Activated naive CD4-positive, alpha-beta T cell treated with anti-CD3 and anti-CD28 coated beads for 36 hours (primary cell): ENCODE measurements at regions of chr1 and their contacts with region 1.

Region 1: DNA sequence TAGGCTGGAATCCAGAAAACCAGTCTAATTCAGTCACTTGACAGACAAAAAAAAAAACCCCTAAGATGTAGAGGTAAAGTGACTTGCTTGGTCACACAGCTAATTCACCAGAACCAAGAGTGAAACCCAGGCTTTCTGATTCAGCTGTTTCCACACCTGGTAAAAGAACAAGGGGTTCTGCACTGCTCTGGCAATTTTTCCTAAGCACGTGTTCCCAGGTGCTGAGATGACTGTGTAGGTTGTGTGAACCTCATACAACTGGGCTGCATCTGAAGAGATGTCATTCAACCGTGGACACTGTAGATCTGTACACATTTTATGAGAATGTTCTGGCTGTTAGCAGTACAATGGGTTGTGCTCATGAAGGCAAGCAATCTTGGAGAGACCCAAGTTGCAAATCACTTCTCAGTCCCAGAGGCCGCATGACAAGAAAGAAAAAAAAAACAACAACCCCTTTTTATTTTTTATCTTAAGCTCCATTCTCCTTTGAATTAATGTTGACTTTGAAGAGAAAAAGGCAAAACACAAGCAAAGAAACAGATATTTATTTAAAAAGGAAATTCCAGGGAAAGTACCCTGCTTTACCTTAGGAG is 95.4 kb downstream of the INTS7 start:
- DNase-seq: peak; percentile 86
- H3K4me3 Mint-ChIP-seq: no peak overlapping the region
- H3K27ac Mint-ChIP-seq: no peak overlapping the region
- H3K4me1 Mint-ChIP-seq: peaks cover 44% of the 10 kb centered on the region
- H3K27me3 Mint-ChIP-seq: no peaks in the 10 kb centered on the region

Region 2: DNA sequence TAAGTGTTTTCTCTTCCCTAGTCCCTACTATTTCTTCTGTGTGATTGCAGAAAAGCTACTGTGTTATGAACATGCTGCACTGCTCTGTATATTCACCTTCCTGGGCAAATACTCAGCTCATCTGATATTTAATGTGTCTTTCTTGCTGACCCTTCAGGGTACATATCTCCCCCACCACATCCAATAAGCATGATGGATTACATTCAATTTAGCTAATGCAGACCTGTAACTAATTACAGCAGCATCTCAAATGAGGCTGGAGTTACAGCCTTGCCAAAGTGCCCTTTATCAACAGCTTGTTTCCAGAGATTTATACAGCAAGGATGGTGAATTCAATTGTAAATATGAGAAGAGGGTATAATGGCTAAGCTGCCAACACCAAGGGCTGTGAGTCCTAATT is 950.1 kb before region 1 on chr1:
- CTCF ChIA-PET with region 1: no interaction called
- intact Hi-C with region 1: no loop called
- DNase-seq: no peak
- H3K4me3 Mint-ChIP-seq: no peak overlapping the region
- H3K27ac Mint-ChIP-seq: no peak overlapping the region
- H3K4me1 Mint-ChIP-seq: no peaks in the 10 kb centered on the region
- H3K27me3 Mint-ChIP-seq: peaks cover 28% of the 10 kb centered on the region

Region 3: GRCh38 chr1:211680752-211681327 is 259.1 kb before region 1 on chr1:
- CTCF ChIA-PET with region 1: no interaction called
- intact Hi-C with region 1: loop called (anchors 2 kb)
- DNase-seq: peak; percentile 80
- H3K4me3 Mint-ChIP-seq: no peak overlapping the region
- H3K27ac Mint-ChIP-seq: peak overlapping the region; percentile 24
- H3K4me1 Mint-ChIP-seq: peaks cover 7% of the 10 kb centered on the region
- H3K27me3 Mint-ChIP-seq: no peaks in the 10 kb centered on the region

Region 4: GRCh38 chr1:211830330-211831142 is 109.4 kb before region 1 on chr1 and contains the start of gene LPGAT1:
- CTCF ChIA-PET with region 1: no interaction called
- intact Hi-C with region 1: loop called (anchors 1 kb)
- DNase-seq: peak; percentile 75
- H3K4me3 Mint-ChIP-seq: peak within 1 kb of the TSS; percentile 82
- H3K27ac Mint-ChIP-seq: peak within 1 kb of the TSS; percentile 75
- H3K4me1 Mint-ChIP-seq: peaks cover 47% of the 10 kb centered on the region
- H3K27me3 Mint-ChIP-seq: no peaks in the 10 kb centered on the region
- total RNA-seq, gene LPGAT1: 18.6 to 21.7 TPM

Region 5: DNA sequence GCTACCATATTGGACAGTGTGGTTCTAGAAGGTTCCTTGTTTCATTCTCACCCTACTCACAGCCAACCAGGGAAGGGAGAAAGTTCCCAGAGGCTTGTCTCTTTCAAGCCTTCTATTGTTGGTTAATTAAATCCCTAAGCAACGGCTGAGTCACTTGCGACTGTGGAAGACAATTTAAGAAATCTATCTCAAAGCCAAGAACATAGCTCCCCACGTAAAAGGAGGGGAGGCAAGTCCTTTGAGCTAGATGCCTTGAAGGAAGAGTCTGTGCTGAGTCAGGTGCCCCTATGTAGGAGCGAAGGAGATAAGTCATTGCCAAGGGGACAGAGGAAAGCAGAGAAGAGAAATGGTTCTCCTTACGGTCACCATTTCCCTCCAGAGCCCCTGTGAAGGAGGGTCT is 265.9 kb after region 1 on chr1:
- CTCF ChIA-PET with region 1: no interaction called
- intact Hi-C with region 1: no loop called
- DNase-seq: no peak
- H3K4me3 Mint-ChIP-seq: no peak overlapping the region
- H3K27ac Mint-ChIP-seq: no peak overlapping the region
- H3K4me1 Mint-ChIP-seq: no peaks in the 10 kb centered on the region
- H3K27me3 Mint-ChIP-seq: no peaks in the 10 kb centered on the region

Region 6: GRCh38 chr1:212432706-212433576 is 493.0 kb after region 1 on chr1 and contains the start of gene NENF:
- CTCF ChIA-PET with region 1: no interaction called
- intact Hi-C with region 1: loop called (anchors 1 kb)
- DNase-seq: peak; percentile 74
- H3K4me3 Mint-ChIP-seq: peak within 1 kb of the TSS; percentile 76
- H3K27ac Mint-ChIP-seq: no peak within 1 kb of the TSS
- H3K4me1 Mint-ChIP-seq: peaks cover 37% of the 10 kb centered on the region
- H3K27me3 Mint-ChIP-seq: no peaks in the 10 kb centered on the region
- total RNA-seq, gene NENF: 27.0 to 30.9 TPM

Region 7: GRCh38 chr1:212721388-212722247 is 781.6 kb after region 1 on chr1:
- CTCF ChIA-PET with region 1: no interaction called
- intact Hi-C with region 1: loop called (anchors 1 kb)
- DNase-seq: peak; percentile 71
- H3K4me3 Mint-ChIP-seq: no peak overlapping the region
- H3K27ac Mint-ChIP-seq: no peak overlapping the region
- H3K4me1 Mint-ChIP-seq: peaks cover 20% of the 10 kb centered on the region
- H3K27me3 Mint-ChIP-seq: no peaks in the 10 kb centered on the region